Lower leg skin (tissue), 4 donors: ENCODE measurements at regions of chr5 and their contacts with region 1.

Region 1: DNA sequence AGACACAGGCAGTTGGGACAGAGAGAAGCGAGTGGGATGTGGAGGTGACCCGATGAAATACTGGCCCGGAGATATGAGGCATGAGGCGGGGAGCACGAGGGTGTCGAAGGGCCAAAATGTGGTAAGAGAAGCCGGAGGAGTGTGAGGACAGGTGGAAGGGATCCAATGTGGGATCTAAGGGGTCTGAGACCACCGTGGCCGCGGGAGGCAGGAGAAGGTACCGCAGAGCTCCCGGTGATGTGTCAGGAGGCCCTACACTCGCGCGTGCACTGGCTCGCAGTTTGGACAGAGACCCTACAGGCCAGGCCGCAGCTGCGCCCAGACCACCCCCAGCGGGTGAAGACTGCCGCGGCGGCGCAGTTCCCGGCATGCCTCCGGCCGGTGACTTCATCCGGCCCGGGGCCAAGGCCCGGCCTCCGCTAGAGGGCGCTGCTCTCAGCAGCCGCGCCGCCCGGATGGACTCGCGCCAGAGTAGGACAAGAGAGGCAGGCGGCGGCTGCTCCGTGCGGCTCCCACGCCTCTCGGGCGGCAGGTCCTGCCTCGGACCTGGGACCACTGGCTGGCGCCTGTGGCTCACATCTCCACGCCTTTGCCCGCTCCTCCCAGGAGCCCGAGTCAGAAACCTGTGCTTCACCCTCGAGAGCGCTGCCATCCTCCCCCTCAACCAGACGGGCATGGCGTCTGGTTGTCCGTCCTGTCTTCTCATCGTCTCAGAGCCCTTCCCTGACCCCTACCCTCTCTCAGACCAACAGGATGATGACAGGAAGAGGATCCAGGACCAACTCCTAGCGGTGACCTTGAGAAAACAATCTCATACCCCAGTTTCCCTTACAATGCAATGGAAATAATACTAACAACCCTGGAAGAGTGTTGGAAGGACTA is 35.4 kb upstream of the STING1 start:
- DNase-seq: peak; percentile 88 to 98
- H3K4me3 ChIP-seq: no peak overlapping the region
- CTCF ChIP-seq: peak in 1 of 3 donors; percentile 95
- POLR2A ChIP-seq: no peak

Region 2: DNA sequence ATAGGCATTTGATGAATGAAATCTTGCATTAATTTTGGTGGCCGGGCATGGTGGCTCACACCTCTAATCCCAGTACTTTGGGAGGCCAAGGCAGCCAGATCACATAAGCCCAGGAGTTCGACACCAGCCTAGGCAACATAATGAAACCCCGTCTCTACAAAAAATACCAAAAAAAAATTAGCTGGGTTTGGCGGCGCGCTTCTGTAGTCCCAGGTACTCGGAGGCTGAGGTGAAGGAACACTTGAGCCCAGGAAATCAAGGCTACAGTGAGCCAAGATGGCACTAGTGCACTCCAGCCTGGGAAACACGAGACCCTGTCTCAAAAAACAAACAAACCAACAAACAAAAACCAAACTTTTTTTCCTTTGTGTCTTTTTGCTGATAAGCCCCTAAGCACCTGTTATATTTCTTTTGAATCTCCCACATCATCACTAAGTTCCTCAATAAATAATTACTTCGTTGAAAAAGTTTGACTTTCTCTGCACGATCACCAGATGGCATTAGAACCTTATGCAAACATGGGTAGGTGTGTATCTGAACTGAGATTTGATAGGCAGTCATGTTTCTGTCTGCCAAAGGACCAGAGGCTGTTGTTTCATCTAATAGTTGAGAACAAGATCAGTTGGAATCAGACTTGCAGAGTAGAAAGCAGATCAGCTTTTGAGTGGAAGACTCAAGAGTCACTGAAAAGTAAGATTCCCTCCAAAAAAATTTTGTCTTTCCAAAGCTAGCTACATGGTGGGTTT is 229.9 kb before region 1 on chr5:
- intact Hi-C with region 1: loop called (anchors 10 kb)
- DNase-seq: no peak
- H3K4me3 ChIP-seq: no peak overlapping the region
- CTCF ChIP-seq: no peak
- POLR2A ChIP-seq: no peak

Region 3: GRCh38 chr5:139422307-139422893 is 95.5 kb before region 1 on chr5:
- intact Hi-C with region 1: loop called (anchors 2 kb)
- DNase-seq: peak; percentile 34 to 68
- H3K4me3 ChIP-seq: no peak overlapping the region
- CTCF ChIP-seq: peak in 1 of 3 donors; percentile 62
- POLR2A ChIP-seq: no peak

Region 4: DNA sequence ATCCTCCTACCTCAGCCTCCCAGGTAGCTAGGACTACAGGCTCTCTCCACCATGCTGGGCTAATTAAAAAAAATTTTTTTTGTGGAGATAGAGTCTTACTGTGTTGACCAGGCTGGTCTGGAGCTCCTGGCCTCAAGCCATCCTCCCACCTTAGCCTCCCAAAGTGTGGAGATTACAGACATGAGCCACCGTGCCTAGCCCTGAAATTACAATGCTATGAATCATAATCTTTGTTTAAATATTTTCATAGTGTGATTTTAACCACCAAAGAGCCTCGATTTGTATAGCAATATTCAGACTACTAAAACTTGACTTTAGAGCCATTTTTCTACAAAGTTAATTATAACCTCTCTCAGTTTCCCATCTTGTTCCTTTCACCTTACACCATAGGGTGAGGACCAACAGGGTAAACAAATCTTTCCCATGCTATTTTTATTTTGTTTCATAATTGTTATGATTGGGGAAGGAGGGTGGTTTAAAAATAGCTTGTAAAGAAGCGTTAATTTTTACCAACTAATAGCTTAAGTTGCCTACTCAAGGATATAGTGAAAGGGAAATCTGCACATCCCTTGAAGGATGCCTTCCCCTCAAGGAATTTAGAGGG is 75.9 kb after region 1 on chr5:
- intact Hi-C with region 1: no loop called
- DNase-seq: no peak
- H3K4me3 ChIP-seq: no peak overlapping the region
- CTCF ChIP-seq: no peak
- POLR2A ChIP-seq: no peak